ENCODE measurements at regions of chr20 and their contacts with region 1.

Region 1: DNA sequence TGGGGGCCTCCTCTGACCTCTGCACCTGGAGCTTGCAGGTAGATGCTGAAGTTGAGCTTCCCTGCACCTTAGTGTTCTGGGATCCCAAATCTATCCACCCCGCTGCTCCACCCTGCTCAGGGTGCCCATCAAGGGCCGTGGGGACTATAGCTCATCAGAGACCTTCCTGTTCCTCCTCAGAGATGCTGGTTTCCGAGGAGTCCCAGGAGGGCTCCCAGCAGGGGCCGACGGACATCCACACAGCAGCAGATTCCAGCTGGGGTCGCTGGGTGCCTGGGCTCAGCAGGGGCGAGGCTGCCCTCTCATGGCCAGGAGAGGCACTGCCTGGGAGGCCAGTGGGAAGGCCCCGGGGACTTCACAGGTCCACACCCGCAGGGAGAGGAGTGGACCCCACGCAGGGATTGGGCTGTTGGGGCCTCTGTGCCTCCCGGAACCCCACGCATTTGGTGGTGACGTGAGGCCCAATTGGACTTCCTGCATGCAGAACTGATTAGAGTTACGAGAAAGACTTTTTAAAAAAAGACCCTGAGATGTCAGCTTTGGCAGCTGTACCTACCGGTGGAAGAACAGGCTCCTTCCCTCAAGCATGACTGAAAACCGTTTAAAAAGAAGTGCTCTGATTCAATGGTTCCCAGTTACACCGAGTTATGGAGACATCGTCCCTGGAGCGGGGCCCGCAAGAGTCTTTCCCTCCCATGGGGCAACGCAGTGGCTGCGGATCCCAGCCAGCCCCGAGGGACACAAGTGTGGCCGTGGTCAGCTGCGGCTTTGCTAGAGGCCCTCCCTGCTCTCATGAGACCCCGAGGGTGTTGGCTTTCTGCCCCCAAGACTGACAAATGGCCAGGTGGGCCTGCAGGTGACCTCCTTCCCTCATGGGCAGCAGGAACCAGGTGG is 25.3 kb upstream of the SLCO4A1 start:
- DNase-seq: peak; percentile 84
- ATAC-seq: peak; percentile 57
- H3K4me3 Mint-ChIP-seq: peak overlapping the region; percentile 52
- H3K27ac Mint-ChIP-seq: peak overlapping the region; percentile 93
- H3K4me1 Mint-ChIP-seq: peaks cover 36% of the 10 kb centered on the region
- H3K27me3 Mint-ChIP-seq: no peaks in the 10 kb centered on the region
- CTCF ChIP-seq: peak; percentile 99

Region 2: DNA sequence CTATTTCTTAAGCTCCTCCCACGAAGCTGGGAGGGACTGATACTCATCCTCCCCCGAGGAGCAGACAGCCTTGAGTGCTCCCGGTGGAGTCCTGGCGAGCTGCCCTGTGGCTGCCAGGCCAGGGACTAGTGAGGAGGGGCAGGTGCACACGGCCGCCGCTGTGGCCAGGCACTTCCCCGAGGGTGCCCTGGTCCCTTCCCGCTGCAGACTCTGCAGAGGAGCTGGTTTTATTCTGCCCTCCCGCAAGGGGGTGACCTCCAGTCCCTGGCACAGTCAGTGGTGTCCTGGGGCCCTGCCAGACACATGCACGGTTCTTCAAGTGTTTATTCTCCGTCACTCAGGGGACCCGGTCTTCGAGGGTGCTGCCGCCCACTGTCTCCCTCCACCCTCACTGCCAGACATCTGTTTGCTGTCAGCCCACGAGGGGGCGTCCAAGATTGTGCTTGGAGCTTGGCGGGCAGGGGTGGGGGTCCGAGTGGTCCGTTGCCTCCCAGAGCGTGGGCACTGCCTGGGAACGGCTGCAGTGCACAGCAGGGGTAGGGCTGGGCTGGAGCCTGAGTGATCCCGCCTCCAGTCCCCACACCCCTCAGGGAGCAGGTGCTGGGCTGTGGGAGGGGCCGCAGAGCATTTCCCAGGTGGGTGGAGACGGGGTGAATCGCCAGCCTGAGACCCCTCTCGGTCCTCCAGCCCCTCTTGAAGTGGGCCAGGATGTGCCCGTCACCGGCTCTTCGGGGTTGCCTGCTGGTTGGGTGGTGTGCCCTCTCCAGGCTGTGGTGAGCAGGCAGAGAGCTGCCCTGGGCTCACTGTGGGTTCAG is 206.8 kb before region 1 on chr20:
- CTCF ChIA-PET with region 1: interaction called, 14 read pairs
- POLR2A ChIA-PET with region 1: no interaction called
- intact Hi-C with region 1: no loop called
- DNase-seq: peak; percentile 62
- ATAC-seq: peak; percentile 14
- H3K4me3 Mint-ChIP-seq: no peak overlapping the region
- H3K27ac Mint-ChIP-seq: no peak overlapping the region
- H3K4me1 Mint-ChIP-seq: peaks cover 12% of the 10 kb centered on the region
- H3K27me3 Mint-ChIP-seq: no peaks in the 10 kb centered on the region
- CTCF ChIP-seq: peak; percentile 35

Region 3: DNA sequence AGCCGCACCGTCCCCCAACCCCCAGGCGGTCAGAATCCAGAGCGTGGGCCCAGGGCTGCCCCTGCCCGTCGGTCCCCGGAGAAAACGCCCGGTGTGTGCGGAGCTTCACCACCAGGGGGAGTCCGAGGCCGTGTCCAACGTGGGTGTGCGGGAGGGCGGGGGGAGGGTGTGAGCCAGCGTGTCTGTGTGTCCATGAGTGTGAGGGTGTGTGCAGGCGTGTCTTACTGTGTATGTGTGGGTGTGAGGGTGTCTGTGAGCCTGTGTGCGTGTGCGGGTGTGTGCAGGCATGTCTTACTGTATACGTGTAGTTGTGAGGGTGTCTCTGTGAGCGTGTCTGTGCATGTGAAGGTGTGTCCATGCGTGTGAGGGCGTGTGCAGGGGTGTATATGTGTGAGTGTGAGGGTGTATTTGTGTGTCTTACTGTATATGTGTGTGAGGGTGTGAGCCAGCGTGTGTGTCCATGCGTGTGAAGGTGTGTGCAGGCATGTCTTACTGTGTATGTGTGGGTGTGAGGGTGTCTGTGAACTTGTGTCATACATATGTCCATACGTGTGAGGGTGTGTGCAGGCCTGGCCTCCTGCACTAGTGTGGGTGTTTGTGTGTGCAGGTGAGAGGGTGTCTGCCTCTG is 116.6 kb before region 1 on chr20:
- CTCF ChIA-PET with region 1: interaction called, 35 read pairs
- POLR2A ChIA-PET with region 1: no interaction called
- intact Hi-C with region 1: loop called (anchors 5 kb)
- DNase-seq: peak; percentile 85
- ATAC-seq: peak; percentile 22
- H3K4me3 Mint-ChIP-seq: no peak overlapping the region
- H3K27ac Mint-ChIP-seq: peak overlapping the region; percentile 95
- H3K4me1 Mint-ChIP-seq: peaks cover 31% of the 10 kb centered on the region
- H3K27me3 Mint-ChIP-seq: peaks cover 4% of the 10 kb centered on the region
- CTCF ChIP-seq: peak; percentile 80

Region 4: GRCh38 chr20:62603021-62603906 is 13.7 kb before region 1 on chr20:
- CTCF ChIA-PET with region 1: interaction called, 19 read pairs
- POLR2A ChIA-PET with region 1: interaction called, 10 read pairs
- intact Hi-C with region 1: no loop called
- DNase-seq: peak; percentile 90
- ATAC-seq: peak; percentile 70
- H3K4me3 Mint-ChIP-seq: peak overlapping the region; percentile 68
- H3K27ac Mint-ChIP-seq: peak overlapping the region; percentile 85
- H3K4me1 Mint-ChIP-seq: peaks cover 18% of the 10 kb centered on the region
- H3K27me3 Mint-ChIP-seq: peaks cover 21% of the 10 kb centered on the region
- CTCF ChIP-seq: no peak

Region 5: GRCh38 chr20:62808211-62808865 is 191.4 kb after region 1 on chr20:
- CTCF ChIA-PET with region 1: interaction called, 14 read pairs
- POLR2A ChIA-PET with region 1: no interaction called
- intact Hi-C with region 1: no loop called
- DNase-seq: peak; percentile 78
- ATAC-seq: peak; percentile 63
- H3K4me3 Mint-ChIP-seq: peak overlapping the region; percentile 32
- H3K27ac Mint-ChIP-seq: no peak overlapping the region
- H3K4me1 Mint-ChIP-seq: peaks cover 30% of the 10 kb centered on the region
- H3K27me3 Mint-ChIP-seq: no peaks in the 10 kb centered on the region
- CTCF ChIP-seq: peak; percentile 97

Measured in activated CD8-positive, alpha-beta T cell treated with anti-CD3 and anti-CD28 coated beads for 36 hours (primary cell).